Cardiac septum (tissue), 1 donor: ENCODE measurements at regions of chr19 and their contacts with region 1.

Region 1: GRCh38 chr19:4732680-4733114 is 9.1 kb upstream of the DPP9 start:
- DNase-seq: no peak

Region 2: GRCh38 chr19:4803736-4804695 is 71.3 kb after region 1 on chr19:
- intact Hi-C with region 1: loop called (anchors 1 kb)
- DNase-seq: no peak